Activated CD8-positive, alpha-beta memory T cell treated with anti-CD3 and anti-CD28 coated beads, Interleukin-2, amount 10 ng/mL, durations not matched to agents 7 days and 5 days (primary cell): ENCODE measurements at regions of chr9 and their contacts with region 1.

Region 1: DNA sequence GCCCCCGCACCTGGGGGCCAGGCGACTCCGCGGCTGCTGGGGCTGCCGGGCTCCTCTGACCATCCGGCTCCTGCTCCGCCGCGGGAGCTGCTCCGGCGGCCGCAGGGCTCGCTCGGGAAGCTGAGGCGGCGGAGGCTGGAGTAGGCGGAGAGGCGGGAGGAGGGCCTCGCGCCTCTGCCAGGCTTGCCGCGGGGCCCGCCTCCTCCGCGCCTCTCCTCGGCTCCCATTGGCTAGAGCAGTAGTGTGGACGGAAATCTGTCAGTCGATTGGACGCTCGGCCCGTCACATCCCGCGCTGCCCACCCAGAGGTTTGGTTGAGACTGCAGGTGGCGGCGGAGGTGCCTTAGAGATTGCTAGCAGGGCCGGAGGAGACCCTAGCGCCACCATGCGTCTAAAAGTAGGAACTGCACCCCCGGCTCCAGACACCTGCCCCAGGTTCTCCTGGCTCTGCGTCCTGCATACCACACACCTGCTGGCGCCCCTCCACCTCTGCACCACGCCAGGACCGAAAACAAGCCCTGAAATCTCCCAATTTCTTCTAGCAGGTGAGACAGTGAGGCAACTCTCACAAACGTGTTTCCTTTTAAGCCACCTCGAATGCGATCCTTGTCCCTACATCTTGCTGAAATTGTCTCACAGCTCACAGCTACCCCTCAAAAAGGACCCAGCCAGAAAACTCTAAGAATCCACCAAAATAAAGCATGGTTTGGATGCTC is at the start of gene SCAI:
- DNase-seq: peak; percentile 100
- ATAC-seq: peak; percentile 100
- H3K4me3 Mint-ChIP-seq: peak within 1 kb of the TSS; percentile 91
- H3K27ac Mint-ChIP-seq: peak within 1 kb of the TSS; percentile 78
- H3K4me1 Mint-ChIP-seq: peaks cover 35% of the 10 kb centered on the region
- H3K27me3 Mint-ChIP-seq: no peaks in the 10 kb centered on the region
- total RNA-seq, gene SCAI: 9.4 to 13.7 TPM

Region 2: DNA sequence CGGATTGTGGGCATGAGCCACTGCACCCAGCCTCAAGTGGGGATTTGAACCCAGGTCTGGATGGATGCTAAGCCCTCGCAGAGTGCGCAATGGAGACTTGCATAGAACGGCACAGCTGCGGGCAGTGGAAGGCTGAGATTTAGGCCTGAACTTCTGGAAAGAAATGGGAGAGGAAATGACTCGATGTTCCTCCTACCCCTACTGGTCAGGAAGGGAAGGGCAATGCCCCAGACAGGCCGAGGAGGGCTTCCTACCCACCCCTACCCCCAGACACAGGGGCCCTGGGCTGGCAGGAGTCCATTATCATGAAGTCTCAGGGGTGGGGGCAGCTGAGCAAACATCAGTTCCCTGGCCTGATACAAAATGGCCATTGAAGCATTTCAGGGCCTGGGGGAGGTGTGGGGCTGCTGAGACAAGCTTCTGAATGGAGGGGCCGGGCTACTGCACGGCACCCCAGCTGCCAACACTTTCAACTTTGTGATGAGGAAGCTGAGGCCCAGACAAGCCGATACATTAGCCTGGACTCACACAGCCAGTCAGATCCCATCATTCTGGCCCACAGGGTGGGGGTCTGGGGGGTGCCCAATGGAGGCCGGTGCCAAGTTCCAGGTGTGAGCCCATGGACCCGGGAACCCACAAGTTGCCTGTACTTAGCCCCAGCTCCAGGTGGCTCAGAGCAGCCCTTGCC is 303.8 kb before region 1 on chr9:
- CTCF ChIA-PET with region 1: no interaction called
- DNase-seq: no peak
- ATAC-seq: no peak
- H3K4me3 Mint-ChIP-seq: no peak overlapping the region
- H3K27ac Mint-ChIP-seq: no peak overlapping the region
- H3K4me1 Mint-ChIP-seq: no peaks in the 10 kb centered on the region
- H3K27me3 Mint-ChIP-seq: peaks cover 23% of the 10 kb centered on the region

Region 3: DNA sequence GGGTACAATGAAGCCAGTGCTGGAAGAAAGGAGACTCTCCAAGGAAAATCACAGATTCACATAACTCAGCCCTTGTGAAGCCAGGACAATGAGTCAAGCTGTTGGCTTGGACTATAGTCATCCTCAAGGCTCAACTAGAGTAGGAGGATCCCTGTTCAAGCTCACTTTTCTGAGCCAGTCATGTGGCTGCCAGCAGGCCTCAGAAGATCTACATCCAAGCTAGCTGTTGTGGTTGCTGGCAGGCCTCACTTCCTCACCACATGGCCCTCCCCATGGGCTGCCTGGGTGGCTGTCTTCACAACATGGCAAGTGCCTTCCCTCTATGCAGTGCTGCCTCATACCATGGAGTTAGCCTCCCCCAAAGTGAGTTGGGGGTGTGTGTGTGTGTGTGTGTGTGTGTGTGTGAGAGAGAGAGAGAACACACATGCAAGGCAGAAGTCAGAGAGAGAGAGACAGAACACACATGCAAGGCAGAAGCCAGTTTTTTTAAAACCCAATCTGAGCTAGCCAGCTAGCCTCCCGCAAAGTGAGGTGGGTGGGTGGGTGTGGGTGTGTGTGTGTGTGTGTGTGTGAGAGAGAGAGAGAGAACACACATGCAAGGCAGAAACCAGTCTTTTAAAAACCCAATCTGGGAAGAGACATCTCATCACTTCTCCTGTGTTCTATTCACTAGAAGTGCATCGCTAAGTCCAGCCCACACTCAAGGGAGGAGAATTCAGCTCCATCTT is 17.4 kb before region 1 on chr9:
- CTCF ChIA-PET with region 1: interaction called, 28 read pairs
- DNase-seq: peak; percentile 95
- ATAC-seq: peak; percentile 99
- H3K4me3 Mint-ChIP-seq: peak overlapping the region; percentile 32
- H3K27ac Mint-ChIP-seq: peak overlapping the region; percentile 92
- H3K4me1 Mint-ChIP-seq: peaks cover 25% of the 10 kb centered on the region
- H3K27me3 Mint-ChIP-seq: no peaks in the 10 kb centered on the region

Region 4: GRCh38 chr9:125393426-125393825 is 249.9 kb after region 1 on chr9:
- CTCF ChIA-PET with region 1: no interaction called
- DNase-seq: no peak
- ATAC-seq: peak; percentile 30
- H3K4me3 Mint-ChIP-seq: no peak overlapping the region
- H3K27ac Mint-ChIP-seq: no peak overlapping the region
- H3K4me1 Mint-ChIP-seq: no peaks in the 10 kb centered on the region
- H3K27me3 Mint-ChIP-seq: no peaks in the 10 kb centered on the region

Region 5: DNA sequence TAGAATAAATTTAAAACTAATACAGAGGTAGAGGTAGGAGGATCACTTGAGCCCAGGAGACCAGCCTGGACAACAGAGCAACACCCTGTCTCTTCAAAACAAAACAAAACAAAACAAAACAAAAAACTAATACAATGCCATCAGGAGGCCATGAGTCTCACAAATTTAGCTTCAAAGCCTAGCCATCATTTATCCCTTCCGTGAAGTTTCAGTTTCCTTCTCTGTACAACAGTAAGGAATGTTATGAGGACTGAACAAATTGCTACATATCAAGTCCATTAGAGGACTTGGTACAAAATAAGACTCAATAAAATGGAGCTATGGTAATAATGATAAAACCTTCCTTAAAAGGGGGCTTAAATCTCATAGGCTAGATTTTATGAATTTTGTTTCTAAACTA is 502.7 kb after region 1 on chr9:
- CTCF ChIA-PET with region 1: no interaction called
- DNase-seq: no peak
- ATAC-seq: peak; percentile 38
- H3K4me3 Mint-ChIP-seq: peak overlapping the region; percentile 50
- H3K27ac Mint-ChIP-seq: peak overlapping the region; percentile 35
- H3K4me1 Mint-ChIP-seq: peaks cover 48% of the 10 kb centered on the region
- H3K27me3 Mint-ChIP-seq: no peaks in the 10 kb centered on the region